Activated CD4-positive, alpha-beta memory T cell treated with anti-CD3 and anti-CD28 coated beads, Interleukin-2, amount 10 ng/mL, durations not matched to agents 7 days and 5 days (primary cell): ENCODE measurements at regions of chr17 and their contacts with region 1.

Region 1: DNA sequence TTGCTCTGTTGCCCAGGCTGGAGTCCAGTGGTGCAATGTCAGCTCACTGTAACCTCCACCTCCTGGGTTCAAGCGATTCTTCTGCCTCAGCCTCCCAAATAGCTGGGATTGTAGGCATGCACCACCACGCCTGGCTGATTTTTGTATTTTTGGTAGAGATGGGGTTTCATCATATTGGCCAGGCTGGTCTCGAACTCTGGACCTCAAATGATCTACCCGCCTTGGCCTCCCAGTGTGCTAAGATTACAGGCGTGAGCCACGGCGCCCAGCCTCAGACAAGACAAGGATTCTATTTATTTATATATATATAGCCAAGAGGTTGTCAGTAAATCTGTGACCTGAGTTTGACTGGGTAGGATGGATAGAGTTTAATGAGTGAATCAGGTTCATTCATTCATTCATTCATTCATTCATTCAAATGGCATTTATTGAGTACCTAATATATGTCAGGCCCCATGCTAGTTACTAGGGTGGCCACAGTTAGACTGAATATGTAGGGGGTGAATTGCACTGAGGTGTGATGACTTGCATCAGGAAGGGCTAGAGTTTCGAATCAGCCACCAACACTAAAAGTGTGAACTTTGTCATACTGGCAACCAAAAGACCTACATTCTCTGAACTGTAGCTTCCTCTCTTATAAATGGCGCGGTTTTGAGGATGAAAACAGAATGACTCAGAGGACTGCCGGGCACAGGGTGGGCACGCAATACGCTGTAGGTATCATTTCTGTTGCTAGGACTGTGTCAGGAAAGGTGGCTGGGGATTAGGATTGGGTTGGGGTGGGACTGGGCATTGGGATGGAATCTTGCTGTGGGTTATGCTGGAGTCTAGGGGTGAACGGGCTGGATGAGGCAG is 37.8 kb downstream of the ITGAE start:
- DNase-seq: peak; percentile 68
- H3K4me3 Mint-ChIP-seq: peak overlapping the region; percentile 75
- H3K27ac Mint-ChIP-seq: peak overlapping the region; percentile 97
- H3K4me1 Mint-ChIP-seq: peaks cover 64% of the 10 kb centered on the region
- H3K27me3 Mint-ChIP-seq: no peaks in the 10 kb centered on the region

Region 2: DNA sequence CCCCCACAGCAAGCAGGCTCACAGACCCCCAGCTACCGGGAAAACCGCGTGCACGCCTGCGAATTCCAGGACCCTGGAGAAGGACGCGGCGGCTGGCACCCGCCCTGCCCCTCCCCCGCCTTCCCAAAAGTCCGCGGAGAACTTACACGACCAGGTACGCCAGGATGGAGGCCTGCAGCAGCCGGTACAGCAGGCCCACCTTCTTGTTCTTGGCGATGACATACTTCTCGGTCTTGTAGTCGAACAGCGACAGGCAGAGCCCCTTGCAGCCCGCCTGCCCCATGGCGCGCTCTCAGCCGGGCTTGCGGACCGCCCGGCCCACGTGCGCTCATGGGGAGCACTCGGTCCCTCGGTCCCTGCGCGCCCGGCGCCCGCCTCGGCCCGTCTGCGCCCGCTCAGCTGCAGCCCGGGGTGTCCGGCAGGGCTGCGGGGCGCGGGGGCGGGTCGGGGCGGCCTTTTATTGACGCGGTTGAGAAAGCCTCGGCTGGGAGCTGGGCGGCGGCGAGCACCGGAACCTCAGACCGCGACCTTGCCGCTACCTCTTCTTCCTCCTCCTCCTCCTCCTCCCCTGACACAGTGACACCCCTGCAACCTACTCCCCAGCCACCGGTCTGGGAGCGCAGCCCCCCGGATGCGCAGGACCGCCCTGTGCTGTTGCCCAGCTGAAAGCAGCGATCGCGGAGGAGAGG is 67.3 kb before region 1 on chr17 and contains the start of gene P2RX5:
- CTCF ChIA-PET with region 1: no interaction called
- POLR2A ChIA-PET with region 1: no interaction called
- DNase-seq: peak; percentile 61
- H3K4me3 Mint-ChIP-seq: peak within 1 kb of the TSS; percentile 85
- H3K27ac Mint-ChIP-seq: peak within 1 kb of the TSS; percentile 79
- H3K4me1 Mint-ChIP-seq: peaks cover 34% of the 10 kb centered on the region
- H3K27me3 Mint-ChIP-seq: no peaks in the 10 kb centered on the region
- total RNA-seq, gene P2RX5: 30.8 to 31.1 TPM

Region 3: DNA sequence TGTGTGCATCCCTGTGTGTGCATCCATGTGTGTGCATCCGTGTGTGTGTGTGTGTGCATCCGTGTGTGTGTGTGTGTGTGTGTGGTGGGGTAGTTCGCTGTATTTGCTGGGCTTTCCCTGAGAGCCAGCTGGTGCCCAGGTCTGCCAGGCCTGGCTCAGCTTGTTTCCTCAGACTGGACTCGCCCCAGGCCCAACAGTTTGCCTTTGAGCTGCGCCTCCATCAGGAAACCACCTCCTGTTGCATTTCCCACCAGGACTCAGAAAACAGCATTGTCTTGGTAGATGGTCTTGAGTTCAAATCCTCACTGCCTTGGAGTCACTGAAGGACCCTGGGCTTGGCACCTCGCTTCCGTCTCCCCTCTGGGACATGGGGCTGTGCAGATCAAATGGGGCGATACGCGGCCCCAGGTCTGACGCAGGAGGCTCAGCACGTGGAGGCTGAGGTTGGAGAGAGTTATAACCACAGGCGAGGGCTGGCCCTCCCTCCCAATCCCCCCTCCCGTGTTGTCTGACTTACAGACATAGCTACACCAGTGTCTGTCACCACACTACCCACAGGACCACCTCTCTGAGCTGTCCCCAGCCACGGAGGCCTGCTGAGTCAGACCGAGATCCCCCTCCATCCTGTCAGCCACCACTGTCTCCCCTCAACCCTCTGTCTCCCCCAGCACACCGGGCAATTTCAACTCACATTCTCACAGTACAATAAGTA is 33.1 kb after region 1 on chr17:
- CTCF ChIA-PET with region 1: interaction called, 3 read pairs
- POLR2A ChIA-PET with region 1: interaction called, 13 read pairs
- DNase-seq: peak; percentile 89
- H3K4me3 Mint-ChIP-seq: no peak overlapping the region
- H3K27ac Mint-ChIP-seq: peak overlapping the region; percentile 25
- H3K4me1 Mint-ChIP-seq: peaks cover 58% of the 10 kb centered on the region
- H3K27me3 Mint-ChIP-seq: no peaks in the 10 kb centered on the region